ENCODE measurements at regions of chr2 and their contacts with region 1.

Region 1: DNA sequence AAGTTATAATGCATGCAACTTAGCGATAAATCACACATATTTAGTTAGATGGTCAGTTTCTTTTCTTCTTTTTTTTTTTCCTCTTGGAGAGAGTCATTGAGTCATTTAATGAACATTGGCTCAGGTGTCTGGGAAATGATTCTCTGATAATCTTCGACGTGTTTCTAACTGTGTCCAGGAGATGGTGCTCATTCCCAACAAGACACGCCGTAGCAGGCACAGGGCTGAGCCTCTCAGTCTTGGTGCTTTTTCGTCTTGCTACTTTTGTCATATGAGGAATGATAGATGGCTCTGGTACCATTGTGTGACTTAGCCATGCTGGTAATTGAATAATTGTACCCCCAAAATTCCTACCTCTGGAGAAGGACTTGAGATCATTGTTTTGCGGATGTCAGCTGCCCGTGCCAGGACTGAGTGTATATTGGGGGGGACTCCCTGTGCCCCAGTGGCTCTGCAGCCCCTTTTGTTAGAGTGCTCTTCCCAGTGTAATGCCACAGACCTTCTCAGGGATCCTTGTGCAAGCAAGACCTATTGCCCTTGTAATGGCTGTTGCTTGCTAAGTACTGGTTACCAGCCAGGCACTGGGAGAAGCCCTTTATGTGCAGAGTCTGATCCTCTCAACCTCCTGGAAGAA is 107.6 kb upstream of the CYRIA start:
- DNase-seq: no peak
- ATAC-seq: peak; percentile 73 to 79

Region 2: GRCh38 chr2:17148407-17149145 is 375.4 kb after region 1 on chr2:
- intact Hi-C with region 1: loop called (anchors 5 to 10 kb)
- DNase-seq: peak; percentile 20
- ATAC-seq: no peak

Region 3: DNA sequence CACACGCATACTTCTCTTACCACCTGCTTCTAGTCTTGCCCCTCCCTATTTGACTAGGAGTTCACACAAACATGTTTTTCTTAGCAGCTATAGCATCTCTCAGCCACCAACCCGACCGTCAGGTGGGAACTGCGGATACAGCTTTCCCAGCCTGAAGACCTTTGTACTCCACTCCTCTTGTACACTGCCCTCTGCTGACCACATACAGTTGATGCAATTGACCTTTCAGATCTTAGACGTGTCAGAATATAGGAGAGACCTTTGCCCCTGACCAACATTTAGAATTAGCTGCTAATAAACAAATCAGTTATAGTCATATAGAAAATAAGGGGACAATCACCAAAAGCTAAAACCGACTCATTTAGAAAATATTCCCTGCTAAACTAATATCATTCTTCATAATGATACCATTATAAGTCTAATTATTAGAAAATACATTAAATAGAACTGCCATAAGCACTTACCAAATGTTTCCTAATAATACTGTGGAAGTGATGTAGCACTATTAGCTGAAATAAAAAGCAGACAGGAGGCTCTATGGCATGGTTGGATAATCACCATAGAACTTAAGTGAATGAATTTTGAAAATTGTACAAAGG is 536.6 kb after region 1 on chr2:
- intact Hi-C with region 1: loop called (anchors 5 to 10 kb)
- DNase-seq: no peak
- ATAC-seq: peak in 1 of 2 donors; percentile 70

Region 4: DNA sequence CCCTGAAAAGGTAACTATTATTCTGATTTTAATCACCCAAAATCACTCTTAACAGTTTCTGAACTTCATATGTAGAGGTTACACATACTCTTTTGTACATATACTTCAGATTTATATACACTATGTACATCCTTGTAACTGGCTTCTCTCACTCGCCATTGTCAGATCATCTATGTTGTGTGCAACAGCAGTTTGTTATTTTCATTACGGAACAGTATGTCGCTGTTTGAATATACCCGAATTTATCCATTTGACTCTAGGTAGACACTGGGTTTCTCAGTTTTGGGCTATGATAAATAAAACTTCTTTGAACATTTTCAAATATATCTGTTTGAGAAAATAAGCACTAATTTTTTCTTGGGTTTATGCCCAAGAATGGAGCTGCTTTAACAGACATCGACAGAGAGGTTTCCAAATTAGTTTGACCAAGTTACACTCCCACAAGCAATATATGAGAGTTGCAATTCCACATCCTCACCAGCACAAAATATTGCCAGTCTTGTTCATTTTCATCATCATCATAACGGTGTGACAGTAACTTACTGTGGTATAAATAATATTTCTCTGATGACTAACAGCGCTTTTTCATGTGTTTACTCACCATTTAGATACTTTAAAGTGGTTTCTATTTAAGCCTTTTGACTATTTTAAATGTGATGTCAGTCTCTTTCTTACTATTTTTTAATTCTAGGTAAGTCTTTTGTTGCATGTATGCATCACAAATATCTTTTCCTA is 899.6 kb after region 1 on chr2:
- intact Hi-C with region 1: loop called (anchors 2 to 10 kb)
- DNase-seq: no peak
- ATAC-seq: no peak